ENCODE measurements at regions of chr11 and their contacts with region 1.

Region 1: DNA sequence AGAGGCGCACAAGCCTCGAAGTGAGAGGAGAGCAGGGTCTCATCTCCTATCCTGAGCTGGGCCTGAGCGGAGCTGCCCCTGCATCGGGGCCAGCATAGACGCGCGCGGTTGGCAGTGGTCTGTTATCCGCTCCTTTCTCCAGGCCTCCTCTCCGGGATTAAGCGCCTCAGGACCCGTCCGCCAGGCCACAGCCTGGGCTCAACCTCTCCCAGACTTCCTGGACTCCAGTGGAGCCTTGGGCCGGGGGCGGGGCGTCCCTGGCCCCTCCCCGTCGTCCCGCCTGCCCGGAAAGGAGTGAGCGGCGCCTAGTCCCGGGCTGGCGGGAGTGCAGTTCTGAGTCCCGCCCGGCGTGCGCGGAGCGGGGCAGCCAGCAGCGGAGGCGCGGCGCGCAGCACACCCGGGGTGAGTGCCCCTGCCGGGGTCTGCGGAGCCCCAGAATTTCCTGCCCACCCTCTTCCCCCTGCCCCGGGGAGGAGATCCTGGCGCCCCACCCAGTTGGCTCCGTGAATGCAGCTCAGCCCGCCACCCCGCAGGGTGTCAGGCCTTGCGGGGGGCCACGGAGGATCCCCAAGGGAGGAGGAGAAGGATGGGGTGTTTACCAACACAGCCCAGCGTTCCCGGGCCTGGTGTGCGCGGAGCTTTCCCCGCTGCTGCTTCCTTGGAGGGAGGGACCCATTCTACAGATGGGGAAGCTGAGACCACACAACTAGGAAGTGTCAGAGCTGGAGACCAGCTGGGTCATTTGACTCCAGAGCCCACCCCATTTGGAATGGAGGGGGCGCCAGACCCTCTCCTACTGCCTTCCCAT is at the start of gene TCIRG1:
- DNase-seq: peak; percentile 65 to 83
- ATAC-seq: peak; percentile 68 to 74
- H3K4me3 ChIP-seq: peak within 1 kb of the TSS; percentile 62 to 69 (median 65)
- H3K27ac ChIP-seq: peak within 1 kb of the TSS; percentile 74 to 88 (median 76)
- H3K4me1 ChIP-seq: peaks cover 14 to 32% of the 10 kb centered on the region in 2 donors
- H3K27me3 ChIP-seq: no peaks in the 10 kb centered on the region
- CTCF ChIP-seq: peak in 3 of 5 experiments; percentile 4 to 36 (median 23)
- POLR2A ChIP-seq: peak; percentile 88 to 93
- total RNA-seq, gene TCIRG1: 13.4 to 24.5 (median 14.1) TPM

Region 2: GRCh38 chr11:68003846-68004550 is 34.9 kb before region 1 on chr11 and contains the start of gene UNC93B1:
- in situ Hi-C with region 1: no loop called
- intact Hi-C with region 1: loop called (anchors 5 kb)
- DNase-seq: peak; percentile 60 to 74
- ATAC-seq: peak; percentile 66 to 67
- H3K4me3 ChIP-seq: peak within 1 kb of the TSS; percentile 54 to 77 (median 63)
- H3K27ac ChIP-seq: peak within 1 kb of the TSS in 3 of 4 donors; percentile 47 to 54 (median 51)
- H3K4me1 ChIP-seq: no peaks in the 10 kb centered on the region
- H3K27me3 ChIP-seq: peaks cover 0 to 4% (median 0%) of the 10 kb centered on the region in 3 donors
- CTCF ChIP-seq: no peak
- POLR2A ChIP-seq: peak; percentile 28 to 52
- total RNA-seq, gene UNC93B1: 5.4 to 8.8 (median 6.4) TPM

Region 3: GRCh38 chr11:68010090-68011041 is 28.6 kb before region 1 on chr11 and contains the start of gene ALDH3B1:
- in situ Hi-C with region 1: no loop called
- intact Hi-C with region 1: loop called (anchors 2 kb)
- DNase-seq: peak; percentile 71 to 92
- ATAC-seq: peak; percentile 77 to 86
- H3K4me3 ChIP-seq: peak within 1 kb of the TSS; percentile 12 to 39 (median 34)
- H3K27ac ChIP-seq: peak within 1 kb of the TSS; percentile 73 to 79 (median 76)
- H3K4me1 ChIP-seq: peaks cover 7 to 18% of the 10 kb centered on the region in 2 donors
- H3K27me3 ChIP-seq: no peaks in the 10 kb centered on the region
- CTCF ChIP-seq: no peak
- POLR2A ChIP-seq: peak in 1 of 2 donors; percentile 49
- total RNA-seq, gene ALDH3B1: 2.2 to 5.1 (median 3.6) TPM